Dorsolateral prefrontal cortex (tissue), 120 donors: ENCODE measurements at regions of chr5 and their contacts with region 1.

Region 1: GRCh38 chr5:132007399-132008165 is 3.9 kb downstream of the ACSL6 start:
- DNase-seq: peak; percentile 64 to 94 (median 80)
- H3K4me3 ChIP-seq: peak overlapping the region in 6 of 59 donors; percentile 12 to 87 (median 51)
- H3K27ac ChIP-seq: peak overlapping the region; percentile 6 to 99 (median 90)
- H3K27me3 ChIP-seq: no peaks in the 10 kb centered on the region
- CTCF ChIP-seq: peak; percentile 68 to 96 (median 86)

Region 2: GRCh38 chr5:131423056-131423455 is 584.5 kb before region 1 on chr5:
- intact Hi-C with region 1: loop called in 1 of 2 experiments (anchors 5 kb)
- DNase-seq: no peak
- H3K4me3 ChIP-seq: no peak overlapping the region
- H3K27ac ChIP-seq: peak overlapping the region in 6 of 59 donors; percentile 8 to 51 (median 32)
- H3K27me3 ChIP-seq: no peaks in the 10 kb centered on the region
- CTCF ChIP-seq: peak in 55 of 56 donors; percentile 14 to 74 (median 44)

Region 3: GRCh38 chr5:131634996-131635754 is 372.4 kb before region 1 on chr5 and contains the start of gene RAPGEF6:
- intact Hi-C with region 1: loop called in 1 of 2 experiments (anchors 5 kb)
- DNase-seq: peak; percentile 94 to 99 (median 97)
- H3K4me3 ChIP-seq: peak within 1 kb of the TSS; percentile 54 to 99 (median 88)
- H3K27ac ChIP-seq: peak within 1 kb of the TSS; percentile 89 to 100 (median 98)
- H3K27me3 ChIP-seq: no peaks in the 10 kb centered on the region
- CTCF ChIP-seq: peak in 14 of 56 donors; percentile 4 to 30 (median 19)
- total RNA-seq, gene RAPGEF6: 43.8 to 127 (median 73.9) TPM

Region 4: DNA sequence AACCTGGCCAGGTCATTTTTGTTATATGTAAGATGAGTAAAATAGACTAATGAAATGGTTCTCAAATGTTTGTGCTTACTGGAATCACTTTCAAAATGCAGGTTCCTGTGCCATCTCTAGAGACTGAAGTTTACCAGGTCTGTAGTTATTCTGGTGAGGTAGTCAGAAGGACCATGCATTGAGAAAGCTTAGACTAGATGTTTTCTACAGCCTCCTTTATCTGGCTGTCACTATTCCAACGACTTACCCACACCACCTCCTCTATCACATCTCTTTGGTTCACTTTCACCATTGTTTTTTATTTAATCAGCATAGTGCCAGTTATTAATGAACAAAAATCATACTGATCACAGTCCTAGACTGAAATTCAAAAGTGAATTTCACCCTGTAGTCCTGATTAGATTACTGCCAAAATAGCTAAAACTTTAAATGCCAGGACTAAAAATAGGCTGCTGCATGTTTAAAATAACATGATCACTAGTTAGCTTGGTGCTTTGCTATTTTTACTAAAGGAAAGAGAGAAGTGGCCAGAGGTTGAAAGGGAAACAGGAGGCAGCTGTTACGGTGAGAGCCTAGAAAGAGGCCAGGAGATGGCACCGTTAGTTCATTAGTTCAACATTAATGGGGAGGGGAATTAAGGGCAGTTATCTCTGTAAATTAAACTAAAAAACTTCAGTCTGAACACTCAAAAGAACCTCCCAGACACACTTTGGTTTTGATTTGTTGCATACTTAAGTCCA is 196.9 kb before region 1 on chr5:
- intact Hi-C with region 1: loop called (anchors 2 to 5 kb)
- DNase-seq: no peak
- H3K4me3 ChIP-seq: no peak overlapping the region
- H3K27ac ChIP-seq: peak overlapping the region in 7 of 59 donors; percentile 2 to 65 (median 23)
- H3K27me3 ChIP-seq: no peaks in the 10 kb centered on the region
- CTCF ChIP-seq: peak in 54 of 56 donors; percentile 13 to 73 (median 46)

Region 5: DNA sequence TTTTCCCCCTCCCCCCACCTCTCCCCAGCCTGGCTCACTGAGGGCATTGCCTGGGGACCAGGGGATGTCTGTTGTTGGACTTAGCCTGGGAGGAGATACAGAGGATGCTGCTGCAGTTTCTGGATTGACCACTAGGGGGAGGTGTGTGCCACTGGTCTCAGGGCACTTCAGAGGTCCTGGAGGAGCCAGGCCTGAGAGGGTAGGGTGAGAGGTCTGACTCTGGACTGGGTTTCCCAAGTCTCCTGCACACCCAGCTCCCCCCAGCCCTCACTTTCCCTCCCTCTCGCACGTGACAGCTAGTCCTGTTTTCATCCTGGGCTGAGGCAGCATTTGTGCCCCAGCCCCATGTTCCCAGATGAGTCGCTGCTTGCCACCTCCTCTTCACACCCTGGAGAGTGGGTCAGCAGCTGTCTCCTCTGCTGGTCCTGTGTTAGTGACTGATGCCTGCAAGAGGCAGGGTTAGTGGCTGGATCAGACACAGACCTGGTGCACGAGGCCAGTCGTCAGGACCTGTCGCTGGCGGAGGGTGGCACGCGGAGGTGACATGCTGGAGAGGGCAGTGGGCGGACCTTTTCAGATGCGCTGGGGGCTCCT is 57.3 kb after region 1 on chr5:
- intact Hi-C with region 1: loop called in 1 of 2 experiments (anchors 5 kb)
- DNase-seq: peak in 9 of 10 donors; percentile 56 to 82 (median 73)
- H3K4me3 ChIP-seq: no peak overlapping the region
- H3K27ac ChIP-seq: no peak overlapping the region
- H3K27me3 ChIP-seq: no peaks in the 10 kb centered on the region
- CTCF ChIP-seq: peak; percentile 67 to 96 (median 90)